CD4-positive, alpha-beta memory T cell (primary cell): ENCODE measurements at regions of chr21 and their contacts with region 1.

Region 1: GRCh38 chr21:42107881-42108553 is 36.9 kb downstream of the UMODL1 start:
- DNase-seq: peak; percentile 53 to 73 (median 71)
- H3K4me3 ChIP-seq: no peak overlapping the region
- H3K4me3 Mint-ChIP-seq: peak overlapping the region in 6 of 8 donors; percentile 23 to 72 (median 54)
- H3K27ac ChIP-seq: no peak overlapping the region
- H3K27ac Mint-ChIP-seq: peak overlapping the region in 2 of 7 donors; percentile 43 to 62
- H3K4me1 ChIP-seq: peaks cover 12% of the 10 kb centered on the region
- H3K4me1 Mint-ChIP-seq: peaks cover 4 to 9% (median 4%) of the 10 kb centered on the region in 4 donors
- H3K27me3 ChIP-seq: no peaks in the 10 kb centered on the region
- H3K27me3 Mint-ChIP-seq: peaks cover 2% of the 10 kb centered on the region in 2 donors

Region 2: DNA sequence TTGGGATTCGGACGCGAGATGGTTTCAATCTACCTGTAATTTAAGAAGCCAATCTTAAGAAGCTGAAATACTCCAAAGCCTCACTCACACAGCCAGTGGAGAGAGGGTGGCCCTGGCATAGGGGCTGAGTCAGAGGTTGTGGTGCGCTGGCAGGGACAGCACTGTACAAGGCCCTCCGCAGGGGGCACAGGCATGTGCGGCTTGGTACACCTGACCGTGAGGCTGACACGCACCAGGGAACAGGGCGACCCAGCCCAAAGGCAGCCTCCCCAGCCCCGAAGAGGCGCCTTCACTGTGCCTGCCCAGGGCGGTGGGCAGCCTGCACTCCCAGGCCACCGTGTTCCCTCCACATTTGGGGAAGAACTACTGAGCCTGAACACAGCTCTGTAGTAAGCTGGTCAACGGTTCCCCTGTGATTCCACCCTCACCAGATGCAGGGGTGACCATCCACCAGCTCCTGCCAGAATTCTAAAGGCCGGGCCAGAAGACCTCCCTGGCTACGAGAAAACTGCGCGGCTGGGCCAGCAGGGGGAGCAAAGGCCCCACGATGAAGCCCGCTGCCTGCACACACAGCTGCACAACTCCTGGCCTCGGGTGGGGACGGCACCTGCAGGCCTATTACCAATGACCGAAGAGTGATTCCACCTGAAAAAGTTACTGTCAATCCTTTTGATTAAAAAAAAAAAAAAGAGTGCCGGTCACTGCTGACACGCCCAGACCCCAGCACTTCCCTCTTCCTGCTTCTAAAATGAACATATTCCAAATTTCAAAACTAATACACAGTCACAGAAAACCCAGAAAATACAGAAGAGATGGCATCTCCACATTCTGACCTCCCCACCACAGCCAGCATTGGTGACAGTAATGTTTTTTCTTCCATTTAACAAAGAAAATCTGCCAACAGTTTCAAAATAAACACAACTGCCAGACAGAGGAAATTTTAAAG is 291.5 kb before region 1 on chr21:
- CTCF ChIA-PET with region 1: interaction called, 41 read pairs
- POLR2A ChIA-PET with region 1: interaction called, 4 read pairs
- intact Hi-C with region 1: loop called (anchors 2 kb)
- DNase-seq: peak; percentile 41 to 54 (median 46)
- H3K4me3 ChIP-seq: no peak overlapping the region
- H3K4me3 Mint-ChIP-seq: no peak overlapping the region
- H3K27ac ChIP-seq: no peak overlapping the region
- H3K27ac Mint-ChIP-seq: peak overlapping the region in 2 of 7 donors; percentile 31 to 47
- H3K4me1 ChIP-seq: no peaks in the 10 kb centered on the region
- H3K4me1 Mint-ChIP-seq: peaks cover 0 to 8% (median 2%) of the 10 kb centered on the region in 4 donors
- H3K27me3 ChIP-seq: no peaks in the 10 kb centered on the region
- H3K27me3 Mint-ChIP-seq: no peaks in the 10 kb centered on the region

Region 3: DNA sequence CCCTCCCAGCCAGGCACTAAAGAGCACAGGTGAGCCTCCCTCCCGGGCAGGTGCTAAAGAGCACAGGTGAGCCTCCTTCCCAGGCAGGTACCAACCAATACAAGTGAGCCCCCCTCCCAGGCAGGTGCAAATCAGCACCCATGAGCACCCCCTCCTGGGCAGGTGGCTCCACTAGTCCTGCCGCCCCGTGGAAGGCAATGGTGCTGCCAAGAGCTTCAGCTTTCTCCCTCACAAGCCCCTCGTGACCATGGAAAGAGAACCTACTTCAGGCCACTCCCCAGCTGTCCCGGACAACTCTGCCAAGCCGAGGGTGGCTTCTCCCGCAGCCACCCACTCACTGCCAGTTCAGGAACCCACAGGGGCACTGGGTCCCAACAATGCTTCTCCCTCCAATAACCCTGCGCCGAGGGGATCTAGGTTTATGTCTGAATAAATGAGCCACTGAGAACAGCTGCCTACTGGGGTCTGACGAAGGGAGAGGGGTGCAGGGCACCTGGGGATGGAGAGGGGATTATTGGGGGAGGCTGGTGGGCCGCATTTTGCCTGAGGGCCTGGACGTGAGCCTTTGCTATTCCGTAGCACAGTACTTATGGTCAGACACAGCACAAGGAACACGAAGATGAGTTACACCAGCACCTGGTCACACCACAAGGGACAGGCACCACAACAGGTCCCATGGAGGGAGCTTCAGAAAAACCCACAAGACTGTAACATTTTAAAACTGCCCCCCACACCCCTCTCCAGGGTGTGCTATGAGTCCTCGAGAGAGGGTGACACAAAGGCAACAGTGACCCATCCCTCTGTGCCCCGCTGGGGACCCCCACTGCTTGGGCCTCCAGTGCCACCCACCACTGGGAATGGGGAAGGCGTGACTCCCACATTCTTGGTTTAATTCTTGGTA is 275.2 kb before region 1 on chr21:
- CTCF ChIA-PET with region 1: no interaction called
- POLR2A ChIA-PET with region 1: no interaction called
- intact Hi-C with region 1: no loop called
- DNase-seq: no peak
- H3K4me3 ChIP-seq: no peak overlapping the region
- H3K4me3 Mint-ChIP-seq: no peak overlapping the region
- H3K27ac ChIP-seq: no peak overlapping the region
- H3K27ac Mint-ChIP-seq: peak overlapping the region in 3 of 7 donors; percentile 14 to 65 (median 62)
- H3K4me1 ChIP-seq: no peaks in the 10 kb centered on the region
- H3K4me1 Mint-ChIP-seq: no peaks in the 10 kb centered on the region
- H3K27me3 ChIP-seq: no peaks in the 10 kb centered on the region
- H3K27me3 Mint-ChIP-seq: no peaks in the 10 kb centered on the region

Region 4: GRCh38 chr21:41895643-41896493 is 212.1 kb before region 1 on chr21:
- CTCF ChIA-PET with region 1: interaction called, 17 read pairs
- POLR2A ChIA-PET with region 1: interaction called, 3 read pairs
- intact Hi-C with region 1: no loop called
- DNase-seq: peak; percentile 37 to 62 (median 57)
- H3K4me3 ChIP-seq: no peak overlapping the region
- H3K4me3 Mint-ChIP-seq: peak overlapping the region in 5 of 8 donors; percentile 5 to 62 (median 31)
- H3K27ac ChIP-seq: no peak overlapping the region
- H3K27ac Mint-ChIP-seq: peak overlapping the region in 6 of 7 donors; percentile 12 to 84 (median 43)
- H3K4me1 ChIP-seq: peaks cover 18% of the 10 kb centered on the region
- H3K4me1 Mint-ChIP-seq: peaks cover 9 to 20% (median 14%) of the 10 kb centered on the region in 4 donors
- H3K27me3 ChIP-seq: no peaks in the 10 kb centered on the region
- H3K27me3 Mint-ChIP-seq: no peaks in the 10 kb centered on the region

Region 5: GRCh38 chr21:41973861-41974751 is 133.9 kb before region 1 on chr21:
- CTCF ChIA-PET with region 1: interaction called, 22 read pairs
- POLR2A ChIA-PET with region 1: no interaction called
- intact Hi-C with region 1: loop called (anchors 1 kb)
- DNase-seq: peak in 4 of 5 donors; percentile 14 to 18 (median 14)
- H3K4me3 ChIP-seq: peak overlapping the region in 1 of 2 donors; percentile 1
- H3K4me3 Mint-ChIP-seq: peak overlapping the region; percentile 44 to 66 (median 54)
- H3K27ac ChIP-seq: no peak overlapping the region
- H3K27ac Mint-ChIP-seq: peak overlapping the region in 6 of 7 donors; percentile 10 to 89 (median 62)
- H3K4me1 ChIP-seq: peaks cover 16% of the 10 kb centered on the region
- H3K4me1 Mint-ChIP-seq: peaks cover 7 to 25% (median 11%) of the 10 kb centered on the region in 4 donors
- H3K27me3 ChIP-seq: no peaks in the 10 kb centered on the region
- H3K27me3 Mint-ChIP-seq: no peaks in the 10 kb centered on the region

Region 6: GRCh38 chr21:42062236-42063022 is 45.6 kb before region 1 on chr21:
- CTCF ChIA-PET with region 1: interaction called, 26 read pairs
- POLR2A ChIA-PET with region 1: interaction called, 43 read pairs
- intact Hi-C with region 1: loop called (anchors 1 kb)
- DNase-seq: peak; percentile 96 to 98 (median 97)
- H3K4me3 ChIP-seq: peak overlapping the region; percentile 64 to 97
- H3K4me3 Mint-ChIP-seq: peak overlapping the region; percentile 84 to 96 (median 90)
- H3K27ac ChIP-seq: peak overlapping the region; percentile 68
- H3K27ac Mint-ChIP-seq: peak overlapping the region; percentile 99 to 100 (median 99)
- H3K4me1 ChIP-seq: peaks cover 45% of the 10 kb centered on the region
- H3K4me1 Mint-ChIP-seq: peaks cover 26 to 73% (median 51%) of the 10 kb centered on the region in 4 donors
- H3K27me3 ChIP-seq: no peaks in the 10 kb centered on the region
- H3K27me3 Mint-ChIP-seq: no peaks in the 10 kb centered on the region

Region 7: DNA sequence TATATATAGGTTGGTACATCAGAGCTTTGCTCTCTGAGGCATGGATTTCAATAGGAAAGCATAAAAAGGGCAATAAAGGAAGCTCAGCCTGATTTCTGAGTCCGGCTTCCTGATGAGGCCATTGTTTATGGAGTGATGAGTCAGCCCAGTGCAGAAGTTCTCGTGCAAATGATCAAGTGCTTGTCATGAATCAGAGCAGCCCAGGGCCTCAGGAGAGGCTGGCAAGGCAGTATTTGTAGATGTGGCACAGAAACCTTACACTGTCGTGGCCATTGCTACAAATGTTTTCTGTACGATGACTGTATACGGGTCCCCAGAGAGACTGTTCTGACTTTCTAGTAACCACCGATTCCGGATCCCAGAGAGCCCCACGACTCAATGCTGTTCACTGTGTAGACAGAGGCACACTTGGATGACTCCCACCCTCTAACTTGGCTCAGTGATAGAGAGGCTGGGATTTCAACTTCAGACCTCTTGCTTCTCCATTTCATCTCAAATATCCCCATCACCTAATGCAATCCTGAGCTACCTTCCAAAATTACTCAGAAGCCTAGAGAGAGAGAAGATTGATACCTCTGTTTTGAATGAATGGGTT is 10.1 kb before region 1 on chr21:
- CTCF ChIA-PET with region 1: interaction called, 11 read pairs
- POLR2A ChIA-PET with region 1: no interaction called
- intact Hi-C with region 1: no loop called
- DNase-seq: no peak
- H3K4me3 ChIP-seq: no peak overlapping the region
- H3K4me3 Mint-ChIP-seq: no peak overlapping the region
- H3K27ac ChIP-seq: no peak overlapping the region
- H3K27ac Mint-ChIP-seq: peak overlapping the region in 1 of 7 donors; percentile 21
- H3K4me1 ChIP-seq: no peaks in the 10 kb centered on the region
- H3K4me1 Mint-ChIP-seq: no peaks in the 10 kb centered on the region
- H3K27me3 ChIP-seq: no peaks in the 10 kb centered on the region
- H3K27me3 Mint-ChIP-seq: peaks cover 2 to 5% of the 10 kb centered on the region in 2 donors